A673 (cell line): ENCODE measurements at regions of chr7 and their contacts with region 1.

Region 1: GRCh38 chr7:68833422-68833821 is 764.9 kb upstream of the AUTS2 start:
- DNase-seq: no peak
- H3K4me3 ChIP-seq: no peak overlapping the region
- H3K27ac ChIP-seq: no peak overlapping the region
- H3K4me1 ChIP-seq: no peaks in the 10 kb centered on the region
- H3K27me3 ChIP-seq: no peaks in the 10 kb centered on the region
- CTCF ChIP-seq: no peak

Region 2: DNA sequence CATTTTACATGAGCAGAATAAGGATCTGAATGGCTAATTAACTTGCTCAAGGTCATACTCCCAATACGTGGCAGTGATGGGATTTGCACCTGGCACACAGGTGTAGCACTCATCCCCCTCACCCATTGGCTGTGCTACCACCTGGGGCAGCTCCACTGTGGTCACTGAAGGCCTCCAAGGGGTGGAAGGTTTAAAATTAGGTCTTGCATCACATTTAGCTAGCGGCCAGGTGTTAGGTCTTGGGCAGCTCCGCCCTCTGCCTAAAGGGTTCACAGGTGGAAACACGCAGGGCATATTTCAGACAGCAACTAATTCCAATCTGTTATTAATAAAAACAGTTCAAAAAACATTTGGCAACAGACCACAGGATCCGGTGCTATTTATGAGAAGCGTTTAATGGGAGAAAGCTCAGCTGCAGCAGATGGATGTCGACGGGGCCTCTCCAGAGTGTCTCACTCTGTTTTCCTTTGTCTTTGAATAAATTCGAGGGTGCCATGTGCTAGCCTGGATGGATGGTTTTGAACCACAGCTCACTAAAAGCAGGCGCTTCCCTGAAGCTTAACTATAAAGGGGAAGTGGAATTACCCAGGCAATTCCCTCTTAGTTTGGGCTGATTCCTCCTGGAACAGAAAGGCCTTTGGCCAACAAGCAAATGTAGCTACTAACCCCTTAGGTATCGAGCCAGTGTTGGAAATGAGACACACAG is 819.2 kb before region 1 on chr7:
- CTCF ChIA-PET with region 1: no interaction called
- POLR2A ChIA-PET with region 1: interaction called, 26 read pairs
- intact Hi-C with region 1: no loop called
- DNase-seq: no peak
- H3K4me3 ChIP-seq: no peak overlapping the region
- H3K27ac ChIP-seq: no peak overlapping the region
- H3K4me1 ChIP-seq: no peaks in the 10 kb centered on the region
- H3K27me3 ChIP-seq: no peaks in the 10 kb centered on the region
- CTCF ChIP-seq: no peak

Region 3: DNA sequence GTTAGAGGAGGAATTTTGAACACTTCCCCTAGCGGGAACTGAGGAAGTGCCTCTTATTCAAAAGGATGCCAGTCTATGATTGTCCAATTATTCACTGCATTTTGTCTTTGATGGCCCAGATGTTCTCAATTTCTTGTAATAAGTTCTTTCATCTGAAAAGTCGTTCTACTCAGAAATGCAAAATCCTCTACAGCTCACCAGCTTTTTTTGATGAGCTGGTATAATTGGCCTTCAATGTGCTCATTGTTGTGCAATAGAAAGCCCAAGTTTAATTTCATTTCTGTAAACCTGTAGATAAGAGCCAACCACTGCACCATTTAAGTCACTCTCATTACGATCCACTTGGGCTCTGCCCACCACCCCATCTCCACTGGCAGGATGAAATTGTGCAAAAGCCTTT is 213.9 kb before region 1 on chr7:
- CTCF ChIA-PET with region 1: no interaction called
- POLR2A ChIA-PET with region 1: no interaction called
- intact Hi-C with region 1: no loop called
- DNase-seq: peak; percentile 88
- H3K4me3 ChIP-seq: no peak overlapping the region
- H3K27ac ChIP-seq: peak overlapping the region; percentile 83
- H3K4me1 ChIP-seq: peaks cover 8% of the 10 kb centered on the region
- H3K27me3 ChIP-seq: no peaks in the 10 kb centered on the region
- CTCF ChIP-seq: no peak; the same call in 1 of the 2 replicates

Region 4: DNA sequence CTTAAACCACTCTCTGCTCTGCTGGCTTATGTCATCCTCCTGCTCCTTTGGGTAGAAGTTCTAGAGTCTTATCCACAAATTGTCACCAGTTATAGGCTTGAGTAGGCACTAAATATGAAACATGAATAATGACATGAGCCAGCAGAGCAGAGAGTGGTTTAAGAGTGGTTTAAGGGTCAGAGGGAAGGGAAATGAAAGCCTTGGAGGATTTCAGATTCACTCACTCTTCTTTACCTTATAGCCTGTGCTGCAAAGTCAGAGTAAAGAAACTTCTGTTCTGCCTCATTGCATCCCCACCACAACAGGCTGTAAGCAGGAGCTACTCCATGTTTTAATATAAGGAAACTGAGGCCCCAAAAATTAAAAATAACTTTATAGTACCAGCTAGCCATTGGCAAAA is 1514.5 kb after region 1 on chr7:
- CTCF ChIA-PET with region 1: no interaction called
- POLR2A ChIA-PET with region 1: no interaction called
- intact Hi-C with region 1: no loop called
- DNase-seq: no peak
- H3K4me3 ChIP-seq: no peak overlapping the region
- H3K27ac ChIP-seq: no peak overlapping the region
- H3K4me1 ChIP-seq: no peaks in the 10 kb centered on the region
- H3K27me3 ChIP-seq: no peaks in the 10 kb centered on the region
- CTCF ChIP-seq: no peak